WTC11 (cell line): ENCODE measurements at regions of chr19 and their contacts with region 1.

Region 1: DNA sequence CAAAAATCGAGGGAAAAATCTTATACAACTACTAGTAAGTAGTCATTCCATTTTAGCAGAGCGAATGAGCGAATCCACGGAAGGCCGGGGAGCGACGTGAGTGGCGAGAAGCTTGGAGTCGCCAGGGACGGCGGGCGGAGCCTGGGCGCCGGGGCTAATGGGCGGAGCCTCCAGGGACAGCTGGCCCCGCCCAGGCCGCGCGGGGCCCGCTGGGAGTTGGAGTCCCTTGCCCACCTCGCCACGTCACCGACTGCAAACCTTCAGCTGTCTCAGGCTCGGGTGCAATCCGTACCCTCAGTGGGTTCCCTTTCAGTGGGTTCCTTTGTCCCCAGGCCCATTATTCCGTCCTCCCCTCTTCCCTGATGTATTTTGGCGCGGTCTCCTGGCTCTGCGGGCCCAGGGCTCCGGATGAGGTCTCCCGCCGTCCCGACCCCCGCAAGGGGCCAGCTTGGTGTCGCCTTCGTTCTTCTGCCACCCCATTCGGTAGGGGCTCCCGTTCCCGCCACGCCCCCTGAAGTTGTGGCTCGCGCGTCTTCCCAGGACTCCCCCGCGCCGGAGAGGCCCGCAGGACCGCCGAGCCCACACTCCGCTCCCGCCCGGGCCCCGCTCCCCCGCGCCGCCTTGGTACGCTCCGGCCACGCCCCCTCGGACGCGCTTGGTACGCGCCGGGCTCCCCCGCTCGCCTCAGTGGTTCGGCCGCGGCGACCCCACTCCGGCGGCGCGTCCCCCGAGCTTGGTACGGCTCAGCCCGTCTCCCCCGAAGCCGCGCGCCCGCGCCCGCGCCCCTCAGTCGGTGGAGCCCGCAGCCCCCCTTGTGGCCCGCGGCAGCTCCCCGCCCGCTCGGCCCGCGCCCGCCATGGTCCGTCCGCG is at the start of gene PTOV1:
- DNase-seq: peak; percentile 88
- ATAC-seq: peak; percentile 81
- H3K4me3 Mint-ChIP-seq: peak within 1 kb of the TSS; percentile 86
- H3K27ac Mint-ChIP-seq: peak within 1 kb of the TSS; percentile 95
- H3K4me1 Mint-ChIP-seq: peaks cover 22% of the 10 kb centered on the region
- H3K27me3 Mint-ChIP-seq: peaks cover 3% of the 10 kb centered on the region; the same call in 1 of the 2 replicates
- CTCF ChIP-seq: no peak
- total RNA-seq, gene PTOV1: 296 to 316 TPM (median 306 TPM) in 3 replicates

Region 2: DNA sequence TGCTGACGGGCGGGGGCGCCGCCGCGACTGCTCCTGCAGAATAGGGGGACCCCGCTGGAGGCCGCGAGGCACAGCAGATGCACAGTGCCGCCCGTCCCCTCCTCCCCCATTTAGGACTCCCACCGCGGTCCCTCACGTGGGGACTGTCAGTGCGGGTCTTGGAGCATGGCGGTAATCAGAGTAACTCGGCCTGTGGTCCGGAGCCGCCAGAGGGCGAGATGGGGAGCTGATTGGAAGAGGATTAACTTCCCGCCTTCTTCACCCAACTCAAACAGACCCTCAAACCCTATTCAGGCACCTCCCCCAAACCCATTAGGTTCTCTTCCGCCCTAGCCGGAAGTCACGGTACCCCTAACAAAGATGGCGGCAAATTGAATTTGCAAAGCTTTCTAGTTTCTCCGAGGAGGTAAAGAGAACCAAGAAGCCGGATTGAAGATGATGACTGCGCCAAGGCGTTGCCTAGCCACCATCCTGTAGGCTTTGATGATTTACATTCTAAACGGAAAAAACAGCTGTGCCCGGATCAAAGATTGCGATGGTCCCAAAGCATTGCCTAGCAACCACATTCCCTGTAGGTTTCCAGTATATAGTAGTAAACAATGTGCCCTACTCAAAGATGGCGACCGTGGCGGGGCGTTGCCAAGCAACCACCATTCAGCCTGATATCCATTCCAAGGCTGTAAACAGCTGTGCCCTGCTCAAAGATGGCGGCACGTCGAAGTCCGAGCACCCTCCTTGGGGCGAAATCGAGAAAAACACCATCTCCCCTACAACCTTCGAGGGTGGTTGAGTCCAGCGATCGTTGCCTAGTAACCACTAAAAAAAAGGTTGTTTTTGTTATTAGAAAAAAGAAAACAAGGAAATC is 37.5 kb before region 1 on chr19 and contains the start of gene FUZ:
- CTCF ChIA-PET with region 1: interaction called, 22 read pairs
- POLR2A ChIA-PET with region 1: interaction called, 7 read pairs
- DNase-seq: peak; percentile 98
- ATAC-seq: peak; percentile 63
- H3K4me3 Mint-ChIP-seq: peak within 1 kb of the TSS; percentile 90
- H3K27ac Mint-ChIP-seq: peak within 1 kb of the TSS; percentile 98
- H3K4me1 Mint-ChIP-seq: peaks cover 26% of the 10 kb centered on the region
- H3K27me3 Mint-ChIP-seq: peaks cover 5% of the 10 kb centered on the region; the same call in 1 of the 2 replicates
- CTCF ChIP-seq: no peak
- total RNA-seq, gene FUZ: 35.1 to 36.3 TPM (median 35.7 TPM) in 3 replicates

Region 3: DNA sequence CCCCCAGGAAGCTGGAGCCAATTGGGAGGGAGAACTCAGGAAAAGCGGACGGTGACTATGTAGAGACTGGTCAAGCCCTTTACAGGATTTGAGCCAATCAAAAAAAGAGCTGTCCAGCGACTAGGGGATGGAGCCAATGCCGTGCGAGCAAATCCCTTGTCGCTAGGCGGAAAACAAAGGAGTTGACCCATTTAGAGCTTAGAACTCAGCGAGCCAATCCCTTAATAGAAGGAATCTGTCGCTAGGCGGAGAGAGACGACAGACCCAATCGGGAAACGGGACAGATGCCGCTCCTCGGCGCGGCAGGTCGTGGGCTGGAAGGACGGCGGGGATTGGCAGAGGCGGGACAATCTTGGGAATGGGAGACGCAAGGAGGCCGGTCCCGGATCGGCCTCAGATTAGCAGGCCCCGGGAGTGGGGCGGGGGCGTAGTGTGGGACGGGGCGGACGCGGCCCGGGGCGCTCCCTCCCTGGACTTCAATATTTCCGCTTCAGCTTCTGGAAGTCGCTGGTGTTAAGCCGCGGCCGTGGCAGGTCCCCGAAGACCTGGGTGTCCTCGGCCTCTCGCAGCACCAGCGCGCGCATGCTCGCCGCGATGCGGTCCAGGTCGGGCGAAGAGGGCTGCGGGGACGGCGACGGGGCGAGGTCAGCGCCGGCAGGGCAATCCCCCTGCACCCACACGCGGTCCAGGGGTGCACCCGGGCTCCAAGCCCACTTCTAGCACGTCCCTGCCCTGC is 18.9 kb after region 1 on chr19:
- CTCF ChIA-PET with region 1: interaction called, 7 read pairs
- POLR2A ChIA-PET with region 1: interaction called, 13 read pairs
- DNase-seq: peak; percentile 97
- ATAC-seq: peak; percentile 82
- H3K4me3 Mint-ChIP-seq: no peak overlapping the region
- H3K27ac Mint-ChIP-seq: peak overlapping the region; percentile 96; the same call in 1 of the 2 replicates
- H3K4me1 Mint-ChIP-seq: peaks cover 25% of the 10 kb centered on the region
- H3K27me3 Mint-ChIP-seq: no peaks in the 10 kb centered on the region
- CTCF ChIP-seq: no peak